ENCODE measurements at regions of chr9 and their contacts with region 1.

Region 1: DNA sequence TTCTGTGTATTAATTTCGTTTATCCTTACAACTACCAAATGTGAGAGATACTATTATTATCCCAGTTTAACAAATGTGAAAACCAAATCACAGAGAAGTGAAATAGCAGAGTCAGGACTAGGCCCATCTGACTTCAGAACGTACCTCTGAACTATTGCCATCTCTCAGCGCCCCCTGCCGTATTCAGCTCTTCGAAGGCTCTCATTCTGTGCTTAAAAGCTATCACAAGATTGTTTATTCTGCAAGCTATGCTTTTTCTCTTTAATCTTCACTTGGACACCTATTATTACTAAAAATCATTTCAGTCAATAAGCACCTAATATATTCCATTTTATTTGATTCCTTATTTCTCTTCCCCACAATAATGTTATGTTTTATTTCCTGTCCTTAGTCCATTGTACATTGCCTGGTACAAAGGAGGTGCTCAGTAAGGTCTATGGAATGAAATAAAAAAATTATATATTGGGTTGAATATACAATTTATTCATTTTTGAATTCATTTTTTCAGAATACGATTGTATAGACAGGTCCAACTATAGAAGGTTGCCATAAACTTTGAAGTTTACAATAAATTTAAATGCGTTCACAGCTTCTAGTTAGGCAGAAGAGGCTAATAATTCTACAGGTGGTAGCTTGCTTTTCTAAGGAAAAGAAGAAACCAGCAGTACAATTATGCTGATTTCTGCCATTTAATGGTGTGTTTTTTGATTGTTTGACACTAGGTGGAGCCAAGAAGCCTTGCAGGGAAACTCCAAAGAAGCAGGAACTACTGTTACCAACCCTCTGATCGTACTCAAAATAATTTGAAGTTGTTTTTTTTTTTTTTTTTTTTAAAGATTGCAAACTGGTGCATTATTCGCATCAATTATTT is 202.2 kb upstream of the DMRTA1 start:
- DNase-seq: peak; percentile 47
- H3K4me3 ChIP-seq: no peak overlapping the region
- H3K27ac ChIP-seq: no peak overlapping the region
- H3K4me1 ChIP-seq: peaks cover 6% of the 10 kb centered on the region
- H3K27me3 ChIP-seq: peaks cover 4 to 7% of the 10 kb centered on the region in 2 experiments
- CTCF ChIP-seq: peak; percentile 28 to 58
- POLR2A ChIP-seq: no peak

Region 2: DNA sequence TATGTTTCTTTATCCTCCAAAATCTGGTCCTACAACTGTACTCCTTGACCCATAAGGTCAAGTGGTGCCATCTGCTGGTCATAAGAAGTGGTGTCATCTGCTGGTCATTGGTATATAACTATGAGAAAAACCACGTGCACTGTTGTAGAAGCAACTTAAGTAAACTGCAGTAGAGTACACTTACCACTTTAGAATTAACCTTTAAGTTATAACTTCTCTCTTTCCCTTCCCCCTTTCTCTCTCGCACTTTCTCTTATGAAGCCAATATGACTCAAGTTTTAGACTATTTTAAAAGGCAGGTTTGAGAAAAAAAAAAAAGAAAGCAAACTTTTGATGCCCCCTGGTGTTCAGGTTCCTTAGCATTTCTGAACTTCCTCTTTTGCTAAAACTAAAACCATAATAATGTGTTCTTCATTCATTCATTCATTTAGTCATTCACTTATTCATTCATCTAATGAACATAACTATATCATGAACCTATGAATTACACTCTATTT is 454.8 kb before region 1 on chr9:
- CTCF ChIA-PET with region 1: no interaction called
- POLR2A ChIA-PET with region 1: no interaction called
- dilution Hi-C with region 1: no loop called
- intact Hi-C with region 1: no loop called
- DNase-seq: peak; percentile 85
- H3K4me3 ChIP-seq: peak overlapping the region in 1 of 3 experiments; percentile 69
- H3K27ac ChIP-seq: no peak overlapping the region
- H3K4me1 ChIP-seq: no peaks in the 10 kb centered on the region
- H3K27me3 ChIP-seq: peaks cover 5 to 23% of the 10 kb centered on the region in 2 experiments
- CTCF ChIP-seq: peak; percentile 45 to 57
- POLR2A ChIP-seq: no peak

Region 3: DNA sequence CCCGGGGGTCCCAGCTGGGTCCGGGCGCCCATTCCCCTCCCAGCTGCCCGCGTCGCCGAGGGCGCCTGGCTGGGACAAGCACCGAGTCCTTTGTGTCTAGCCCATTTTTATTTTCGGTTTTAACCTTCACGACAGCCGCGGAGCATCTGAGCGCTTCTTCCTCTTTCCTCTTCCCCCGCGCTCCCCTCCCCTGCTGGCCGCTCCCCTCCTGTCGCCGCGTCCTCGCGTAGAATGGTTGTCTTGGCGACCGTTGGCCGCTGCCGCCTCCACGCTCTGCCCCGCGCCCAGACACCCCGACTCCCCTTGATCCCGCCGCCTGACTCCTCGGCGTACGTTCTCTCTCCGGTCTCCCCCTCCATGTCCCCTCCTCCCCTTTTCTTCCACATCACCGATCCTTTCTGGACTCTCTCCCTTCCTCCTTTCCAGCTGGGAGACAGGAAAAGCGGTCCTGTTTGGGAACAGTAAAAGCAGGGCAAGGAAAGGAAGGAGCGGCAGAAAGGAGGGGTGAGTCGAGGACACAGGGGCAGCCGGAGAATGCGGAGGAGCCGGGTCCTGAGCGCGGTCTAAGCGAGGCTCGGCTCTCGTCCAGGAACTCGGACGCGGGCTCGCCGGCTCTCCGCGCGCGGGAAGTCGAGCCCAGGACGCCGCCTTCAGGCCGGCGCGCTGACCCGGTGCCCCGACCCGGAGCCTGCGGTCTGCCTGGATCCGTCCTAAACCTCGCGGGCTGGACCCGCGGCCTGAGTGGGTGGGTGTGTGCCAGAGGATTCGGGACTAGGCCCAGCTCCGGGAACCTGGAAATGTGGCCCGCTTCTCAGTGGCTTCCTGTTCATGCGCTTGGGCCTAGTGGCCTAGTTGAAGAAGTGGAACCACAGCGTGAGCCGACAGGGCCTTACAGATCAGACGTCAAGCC is 248.9 kb before region 1 on chr9:
- CTCF ChIA-PET with region 1: interaction called, 10 read pairs
- POLR2A ChIA-PET with region 1: no interaction called
- dilution Hi-C with region 1: no loop called
- intact Hi-C with region 1: no loop called
- DNase-seq: peak; percentile 64
- H3K4me3 ChIP-seq: peak overlapping the region; percentile 64 to 97 (median 94)
- H3K27ac ChIP-seq: peak overlapping the region; percentile 75
- H3K4me1 ChIP-seq: peaks cover 7% of the 10 kb centered on the region
- H3K27me3 ChIP-seq: no peaks in the 10 kb centered on the region
- CTCF ChIP-seq: peak; percentile 23 to 43
- POLR2A ChIP-seq: no peak

Region 4: DNA sequence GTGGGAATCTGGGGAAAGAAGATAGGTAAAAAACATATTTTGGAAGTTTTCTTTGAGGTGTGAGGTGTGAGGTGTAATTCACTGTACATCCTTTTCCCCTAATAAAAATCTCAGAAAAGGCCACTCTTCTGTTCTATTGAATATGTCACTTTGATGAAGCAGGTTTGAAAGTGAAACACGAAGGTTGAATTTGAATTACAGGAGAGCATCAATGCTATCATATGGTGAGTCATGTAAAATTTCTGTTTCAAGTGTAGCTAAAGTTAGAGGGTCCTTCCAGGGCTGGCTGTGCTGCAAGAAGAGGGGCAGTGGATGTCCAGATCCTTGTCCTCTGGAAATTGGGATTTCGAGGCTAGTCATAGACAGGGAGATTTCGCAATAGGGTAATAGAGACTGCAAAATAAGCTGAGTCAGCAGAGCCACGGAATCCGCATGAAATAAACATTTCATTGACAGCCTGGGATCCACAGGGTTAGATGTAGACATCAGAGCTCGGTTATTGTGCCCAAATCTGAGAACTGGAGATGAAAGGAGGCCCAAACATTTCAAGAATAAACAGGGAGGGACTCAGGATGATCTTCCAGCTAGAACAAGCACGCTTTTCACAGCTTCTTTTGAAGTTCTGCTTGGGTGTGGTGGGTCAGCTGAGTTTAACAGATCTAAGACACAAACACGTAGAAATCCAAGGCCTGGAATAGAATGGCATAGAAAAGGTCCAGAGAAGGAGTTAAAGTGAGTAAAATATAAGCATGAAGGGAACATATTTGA is 40.8 kb before region 1 on chr9:
- CTCF ChIA-PET with region 1: no interaction called
- POLR2A ChIA-PET with region 1: no interaction called
- dilution Hi-C with region 1: no loop called
- intact Hi-C with region 1: no loop called
- DNase-seq: no peak
- H3K4me3 ChIP-seq: no peak overlapping the region
- H3K27ac ChIP-seq: no peak overlapping the region
- H3K4me1 ChIP-seq: no peaks in the 10 kb centered on the region
- H3K27me3 ChIP-seq: peaks cover 3 to 4% of the 10 kb centered on the region in 2 experiments
- CTCF ChIP-seq: no peak
- POLR2A ChIP-seq: no peak

Region 5: DNA sequence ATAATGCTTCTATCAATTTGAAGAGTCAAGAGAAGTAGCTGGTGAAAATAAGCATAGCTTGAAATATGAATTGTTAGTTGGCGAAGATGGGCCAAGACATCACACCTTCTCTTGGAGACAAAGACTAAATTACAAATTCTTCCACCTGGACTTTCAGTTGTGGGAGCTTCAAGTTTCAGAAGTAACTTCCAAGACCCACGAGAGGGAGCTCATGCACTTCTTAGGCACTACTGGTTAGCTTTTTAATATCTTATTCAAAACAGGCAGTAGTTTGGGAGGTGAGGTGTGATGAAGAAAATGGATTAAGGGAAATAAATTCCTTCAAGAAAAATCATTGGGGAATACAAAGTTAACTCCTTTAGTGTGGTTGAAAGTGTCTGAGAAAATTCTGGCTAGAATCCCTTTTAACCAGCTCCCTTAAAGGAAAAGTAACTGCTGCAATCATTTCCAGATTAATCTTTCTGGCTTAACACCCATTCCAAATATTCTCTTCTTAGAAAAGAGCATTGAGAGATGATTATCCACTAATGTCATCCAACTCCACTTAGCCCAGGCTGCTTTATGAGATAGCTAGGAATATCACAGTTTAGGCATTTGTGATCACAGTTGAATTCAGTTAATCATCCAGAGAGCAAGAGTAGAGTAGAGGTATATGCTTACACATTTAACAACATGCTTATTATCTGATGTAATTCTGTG is 62.8 kb after region 1 on chr9:
- CTCF ChIA-PET with region 1: interaction called, 17 read pairs
- POLR2A ChIA-PET with region 1: no interaction called
- dilution Hi-C with region 1: no loop called
- intact Hi-C with region 1: no loop called
- DNase-seq: peak; percentile 54
- H3K4me3 ChIP-seq: no peak overlapping the region
- H3K27ac ChIP-seq: no peak overlapping the region
- H3K4me1 ChIP-seq: no peaks in the 10 kb centered on the region
- H3K27me3 ChIP-seq: peaks cover 0 to 5% of the 10 kb centered on the region in 2 experiments
- CTCF ChIP-seq: peak; percentile 48 to 59
- POLR2A ChIP-seq: no peak

Region 6: GRCh38 chr9:22483528-22484070 is 239.2 kb after region 1 on chr9:
- CTCF ChIA-PET with region 1: no interaction called
- POLR2A ChIA-PET with region 1: no interaction called
- dilution Hi-C with region 1: no loop called
- intact Hi-C with region 1: no loop called
- DNase-seq: no peak
- H3K4me3 ChIP-seq: no peak overlapping the region
- H3K27ac ChIP-seq: no peak overlapping the region
- H3K4me1 ChIP-seq: no peaks in the 10 kb centered on the region
- H3K27me3 ChIP-seq: no peaks in the 10 kb centered on the region
- CTCF ChIP-seq: no peak
- POLR2A ChIP-seq: no peak

Measured in endothelial cell of umbilical vein (primary cell).